Right ventricle myocardium superior (tissue), 1 donor: ENCODE measurements at regions of chr1 and their contacts with region 1.

Region 1: GRCh38 chr1:75198761-75199160 is 64.6 kb downstream of the LHX8 start:
- DNase-seq: no peak
- ATAC-seq: no peak

Region 2: DNA sequence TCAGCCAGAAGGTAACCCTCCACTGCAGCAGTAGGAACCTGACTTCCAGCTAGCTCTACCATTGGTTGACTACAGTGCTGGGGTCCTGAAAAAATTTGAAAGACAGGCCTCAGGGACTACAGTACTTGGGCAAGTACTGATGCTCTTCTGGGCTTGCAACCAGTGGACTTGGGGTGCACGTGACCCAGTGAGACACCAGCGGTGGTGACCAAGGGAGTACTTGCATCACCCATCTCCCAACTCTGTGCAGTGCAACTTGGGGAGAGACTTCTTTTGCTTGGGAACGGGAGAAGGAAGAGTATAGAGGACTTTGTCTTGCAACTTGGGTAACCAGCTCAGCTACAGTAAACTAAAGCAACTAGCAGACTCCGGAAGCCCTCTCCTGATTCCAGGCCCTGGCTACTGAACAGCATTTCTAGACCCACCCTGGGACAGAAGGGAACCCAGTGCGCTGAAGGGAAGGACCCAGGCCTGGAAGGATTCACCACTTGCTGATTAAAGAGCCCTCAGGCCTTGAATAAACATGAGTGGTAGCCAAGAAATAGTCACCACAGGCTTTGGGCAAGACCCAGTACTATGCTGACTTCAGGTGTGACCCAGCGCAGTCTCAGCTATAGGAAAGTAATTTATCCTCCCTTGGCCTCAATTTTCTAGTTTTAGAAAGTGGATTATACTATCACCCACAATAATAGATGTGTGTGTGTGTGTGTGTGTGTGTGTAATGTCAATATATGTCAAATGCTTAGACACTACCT is 917.9 kb before region 1 on chr1:
- intact Hi-C with region 1: no loop called
- DNase-seq: no peak
- ATAC-seq: no peak

Region 3: GRCh38 chr1:74771913-74772515 is 426.7 kb before region 1 on chr1:
- intact Hi-C with region 1: loop called (anchors 5 kb)
- DNase-seq: no peak
- ATAC-seq: no peak

Region 4: DNA sequence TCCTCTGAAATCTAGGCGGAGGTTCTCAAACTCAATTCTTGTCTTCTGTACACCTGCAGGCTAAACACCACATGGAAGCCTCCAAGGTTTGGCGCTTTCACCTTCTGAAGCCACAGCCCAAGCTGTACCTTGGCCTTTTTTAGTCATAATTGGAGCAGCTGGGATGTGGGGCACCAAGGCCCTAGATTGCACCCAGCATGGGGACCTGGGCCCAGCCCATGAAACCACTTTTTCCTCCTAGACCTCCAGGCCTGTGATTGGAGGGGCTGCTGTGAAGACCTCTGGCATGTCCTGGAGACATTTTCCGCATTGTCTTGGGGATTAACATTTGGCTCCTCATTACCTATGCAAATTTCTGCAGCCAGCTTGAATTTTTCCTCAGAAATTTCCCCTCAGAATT is 284.8 kb before region 1 on chr1:
- intact Hi-C with region 1: no loop called
- DNase-seq: no peak
- ATAC-seq: no peak